Breast epithelium (tissue), 4 donors: ENCODE measurements at regions of chr4 and their contacts with region 1.

Region 1: GRCh38 chr4:5084911-5085475 is 33.7 kb downstream of the STK32B start:
- DNase-seq: no peak
- H3K4me3 ChIP-seq: no peak overlapping the region
- H3K27ac ChIP-seq: no peak overlapping the region
- H3K4me1 ChIP-seq: no peaks in the 10 kb centered on the region
- H3K27me3 ChIP-seq: no peaks in the 10 kb centered on the region
- CTCF ChIP-seq: no peak
- POLR2A ChIP-seq: no peak

Region 2: DNA sequence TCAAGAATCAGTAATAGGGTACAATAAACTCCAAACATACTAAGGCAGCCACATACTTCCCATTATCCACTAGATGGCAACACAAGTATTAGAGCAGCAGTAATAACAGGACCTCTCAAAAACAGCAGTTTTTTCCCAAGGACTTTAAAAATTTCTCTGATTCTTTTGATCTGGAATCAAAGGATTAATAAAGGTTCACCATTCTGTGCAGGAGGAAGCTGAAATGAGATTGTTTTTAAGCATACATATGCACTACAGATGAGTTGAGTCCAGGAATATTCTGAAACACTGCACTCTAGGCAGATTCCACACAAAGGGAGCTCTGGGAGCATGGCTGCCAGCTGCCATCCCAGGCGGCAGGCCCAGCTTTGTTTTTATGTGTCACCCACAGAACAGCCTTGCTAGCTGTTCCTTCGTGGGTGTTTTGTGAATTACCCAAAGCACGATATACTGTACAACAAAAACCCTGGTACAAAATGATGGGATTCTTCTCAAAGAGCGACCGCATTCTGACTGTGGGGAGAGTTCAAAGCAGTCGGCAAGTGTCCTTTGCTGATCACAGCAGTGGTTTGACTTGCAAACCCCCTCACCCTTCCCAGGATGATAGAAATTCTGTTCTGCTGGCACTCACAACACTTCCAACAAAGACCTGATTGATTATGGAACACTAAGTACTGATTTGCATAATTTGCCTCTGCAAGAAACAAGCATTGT is 604.2 kb before region 1 on chr4:
- intact Hi-C with region 1: loop called (anchors 5 kb)
- DNase-seq: no peak
- H3K4me3 ChIP-seq: no peak overlapping the region
- H3K27ac ChIP-seq: peak overlapping the region in 1 of 2 donors; percentile 7
- H3K4me1 ChIP-seq: peaks cover 0 to 12% of the 10 kb centered on the region in 2 donors
- H3K27me3 ChIP-seq: no peaks in the 10 kb centered on the region
- CTCF ChIP-seq: no peak
- POLR2A ChIP-seq: no peak

Region 3: GRCh38 chr4:5165420-5166369 is 80.7 kb after region 1 on chr4:
- intact Hi-C with region 1: no loop called
- DNase-seq: no peak
- H3K4me3 ChIP-seq: no peak overlapping the region
- H3K27ac ChIP-seq: no peak overlapping the region
- H3K4me1 ChIP-seq: no peaks in the 10 kb centered on the region
- H3K27me3 ChIP-seq: no peaks in the 10 kb centered on the region
- CTCF ChIP-seq: no peak
- POLR2A ChIP-seq: no peak

Region 4: DNA sequence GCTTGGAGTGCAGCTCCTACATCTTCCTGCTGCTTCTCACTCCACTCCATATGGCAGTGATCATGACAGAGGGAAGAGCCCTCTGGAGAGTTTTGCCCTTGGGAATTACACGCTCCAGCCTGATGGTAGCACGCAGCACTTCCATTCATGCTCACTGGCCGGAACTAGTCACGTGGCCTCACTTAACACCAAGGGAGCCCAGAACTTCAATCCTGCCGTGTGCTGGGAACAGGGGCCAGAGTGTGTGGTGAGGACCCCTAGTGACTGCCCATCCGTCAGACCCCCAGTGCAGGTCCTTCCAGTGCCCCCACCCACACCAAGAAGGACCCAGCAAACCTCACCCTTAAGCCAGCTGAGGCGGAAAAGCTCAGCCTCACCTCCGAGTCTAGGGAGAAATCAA is 392.6 kb after region 1 on chr4:
- intact Hi-C with region 1: no loop called
- DNase-seq: no peak
- H3K4me3 ChIP-seq: no peak overlapping the region
- H3K27ac ChIP-seq: no peak overlapping the region
- H3K4me1 ChIP-seq: no peaks in the 10 kb centered on the region
- H3K27me3 ChIP-seq: no peaks in the 10 kb centered on the region
- CTCF ChIP-seq: no peak
- POLR2A ChIP-seq: no peak